Mammary epithelial cell (primary cell): ENCODE measurements at regions of chr18 and their contacts with region 1.

Region 1: GRCh38 chr18:46281185-46282176 is 177.3 kb downstream of the HAUS1 start:
- DNase-seq: peak; percentile 65
- H3K4me3 ChIP-seq: no peak overlapping the region
- H3K27ac ChIP-seq: no peak overlapping the region
- H3K4me1 ChIP-seq: peaks cover 11% of the 10 kb centered on the region
- H3K27me3 ChIP-seq: no peaks in the 10 kb centered on the region
- CTCF ChIP-seq: peak; percentile 96 to 97

Region 2: DNA sequence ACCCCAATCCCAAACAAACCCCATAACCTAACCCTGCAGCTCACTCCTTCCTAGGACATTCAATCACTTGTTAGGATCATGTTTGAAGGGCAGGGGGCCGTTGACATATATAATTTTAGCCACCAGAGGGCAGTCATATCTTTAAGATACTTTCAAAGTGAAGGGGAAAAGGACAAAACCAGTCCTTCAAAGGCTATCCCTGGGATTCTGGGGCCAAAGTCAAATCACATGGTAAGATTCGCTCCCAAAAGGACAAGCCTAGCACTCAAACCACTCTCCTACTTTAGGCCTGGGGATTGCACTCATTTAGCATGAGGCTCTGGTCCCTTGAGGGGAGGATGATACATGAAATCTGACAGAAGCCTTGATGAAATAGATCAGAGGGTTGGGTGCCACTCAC is 132.7 kb before region 1 on chr18:
- CTCF ChIA-PET with region 1: no interaction called
- dilution Hi-C with region 1: no loop called
- in situ Hi-C with region 1: loop called in 1 of 2 experiments (anchors 10 kb)
- intact Hi-C with region 1: loop called (anchors 1 kb)
- DNase-seq: peak; percentile 42
- H3K4me3 ChIP-seq: no peak overlapping the region
- H3K27ac ChIP-seq: no peak overlapping the region
- H3K4me1 ChIP-seq: peaks cover 23% of the 10 kb centered on the region
- H3K27me3 ChIP-seq: no peaks in the 10 kb centered on the region
- CTCF ChIP-seq: peak; percentile 63 to 73

Region 3: DNA sequence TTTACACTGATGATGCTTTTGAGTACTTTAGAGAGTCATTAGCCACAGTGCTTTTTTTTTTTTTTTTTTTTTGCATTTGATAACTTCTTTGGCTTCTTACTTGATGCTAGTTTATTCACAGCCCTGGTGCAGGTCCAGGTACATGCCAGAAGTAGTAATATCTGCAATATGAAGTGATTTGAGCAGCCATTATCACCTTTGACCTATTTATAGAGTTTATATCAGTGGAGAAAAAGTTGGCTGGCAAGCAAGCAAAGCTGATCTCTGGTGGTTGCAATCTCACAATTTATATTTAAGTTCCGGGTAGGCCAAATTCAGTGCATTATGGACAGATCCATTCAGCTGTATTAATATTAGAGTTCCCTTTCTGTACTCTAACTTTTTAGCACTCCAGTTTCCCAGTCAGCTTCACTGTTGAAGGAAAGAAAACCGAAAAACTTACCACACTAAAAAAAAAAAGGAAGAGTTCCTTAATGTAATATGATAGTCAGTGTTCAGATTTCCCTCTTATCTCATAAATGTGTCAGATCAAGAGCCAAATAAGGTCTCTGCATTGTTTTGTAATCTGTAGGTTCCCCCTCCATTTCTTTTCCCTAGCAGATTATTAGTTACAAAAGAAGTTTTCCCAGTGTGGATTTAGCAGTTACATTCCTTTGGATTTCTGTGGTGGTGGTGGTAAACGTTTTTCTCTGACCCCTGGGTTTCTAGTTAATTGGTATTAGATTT is 98.7 kb before region 1 on chr18:
- CTCF ChIA-PET with region 1: no interaction called
- dilution Hi-C with region 1: no loop called
- in situ Hi-C with region 1: no loop called
- intact Hi-C with region 1: no loop called
- DNase-seq: no peak
- H3K4me3 ChIP-seq: no peak overlapping the region
- H3K27ac ChIP-seq: no peak overlapping the region
- H3K4me1 ChIP-seq: no peaks in the 10 kb centered on the region
- H3K27me3 ChIP-seq: no peaks in the 10 kb centered on the region
- CTCF ChIP-seq: no peak

Region 4: GRCh38 chr18:46360866-46361265 is 79.4 kb after region 1 on chr18:
- CTCF ChIA-PET with region 1: no interaction called
- dilution Hi-C with region 1: loop called (anchors 5 kb)
- in situ Hi-C with region 1: no loop called
- intact Hi-C with region 1: no loop called
- DNase-seq: no peak
- H3K4me3 ChIP-seq: no peak overlapping the region
- H3K27ac ChIP-seq: no peak overlapping the region
- H3K4me1 ChIP-seq: no peaks in the 10 kb centered on the region
- H3K27me3 ChIP-seq: no peaks in the 10 kb centered on the region
- CTCF ChIP-seq: no peak

Region 5: DNA sequence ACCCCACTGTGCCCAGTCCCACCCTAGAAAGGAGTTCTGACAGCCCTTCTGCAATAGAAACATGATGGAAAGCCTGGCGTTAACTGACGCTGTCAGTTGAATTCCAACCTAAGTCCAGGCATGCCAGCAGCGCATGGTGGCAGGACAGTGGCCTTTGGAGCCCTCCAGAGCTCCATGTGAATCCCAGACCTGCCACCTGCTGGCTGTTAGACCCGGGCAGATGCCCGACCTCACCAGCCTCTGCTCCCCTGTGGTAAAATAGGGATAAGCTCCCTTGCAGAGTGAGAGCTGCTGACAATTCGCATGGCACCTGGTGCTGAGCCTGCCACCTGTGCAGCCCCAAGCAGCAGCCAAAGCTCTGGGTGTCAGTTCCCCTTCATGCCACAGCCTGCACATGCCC is 237.0 kb after region 1 on chr18:
- CTCF ChIA-PET with region 1: interaction called, 3 read pairs
- dilution Hi-C with region 1: no loop called
- in situ Hi-C with region 1: loop called in 1 of 2 experiments (anchors 25 kb)
- intact Hi-C with region 1: loop called (anchors 1 kb)
- DNase-seq: peak; percentile 13
- H3K4me3 ChIP-seq: no peak overlapping the region
- H3K27ac ChIP-seq: no peak overlapping the region
- H3K4me1 ChIP-seq: no peaks in the 10 kb centered on the region
- H3K27me3 ChIP-seq: no peaks in the 10 kb centered on the region
- CTCF ChIP-seq: peak in 1 of 2 donors; percentile 53

Region 6: DNA sequence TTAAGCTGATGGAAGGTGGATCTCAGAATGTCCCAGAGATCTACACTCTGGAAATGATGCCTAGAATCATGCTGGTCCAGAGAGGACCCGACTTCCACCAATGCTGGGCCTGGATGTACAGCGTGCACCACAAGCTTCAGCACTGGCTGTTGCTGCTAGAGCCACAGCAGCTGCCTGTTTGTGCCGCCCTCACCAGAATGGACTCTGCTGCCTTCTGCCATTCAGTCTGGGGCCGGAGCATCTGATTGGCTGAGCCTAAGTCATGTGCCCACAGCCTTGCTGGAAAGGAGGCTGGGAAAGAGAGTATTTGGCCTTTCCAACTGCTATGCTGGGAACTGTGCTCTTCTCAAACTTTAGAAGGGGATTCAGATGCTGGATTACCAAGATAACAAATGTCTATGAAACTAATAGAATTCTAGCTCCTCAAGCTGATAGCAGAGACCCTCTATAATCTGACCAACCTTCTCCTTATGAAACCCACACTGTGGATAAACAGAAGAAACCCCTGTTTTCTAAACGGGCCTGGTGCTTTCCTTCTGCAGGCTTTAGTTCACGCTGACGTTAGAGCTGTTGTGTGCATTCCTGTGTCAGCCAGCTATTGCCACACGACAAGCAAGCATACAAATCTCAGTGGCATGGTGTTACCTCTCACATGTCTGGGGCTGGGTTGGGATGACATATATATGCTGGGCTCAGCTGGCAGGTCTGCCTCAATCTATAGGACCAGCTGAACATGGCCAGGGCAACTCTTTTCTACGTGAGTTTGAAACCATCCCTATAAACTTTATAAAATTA is 379.7 kb after region 1 on chr18:
- CTCF ChIA-PET with region 1: interaction called, 8 read pairs
- dilution Hi-C with region 1: no loop called
- in situ Hi-C with region 1: loop called in 1 of 2 experiments (anchors 10 kb)
- intact Hi-C with region 1: loop called (anchors 1 kb)
- DNase-seq: no peak
- H3K4me3 ChIP-seq: no peak overlapping the region
- H3K27ac ChIP-seq: no peak overlapping the region
- H3K4me1 ChIP-seq: peaks cover 6% of the 10 kb centered on the region
- H3K27me3 ChIP-seq: no peaks in the 10 kb centered on the region
- CTCF ChIP-seq: no peak